ENCODE measurements at regions of chr15 and their contacts with region 1.

Region 1: DNA sequence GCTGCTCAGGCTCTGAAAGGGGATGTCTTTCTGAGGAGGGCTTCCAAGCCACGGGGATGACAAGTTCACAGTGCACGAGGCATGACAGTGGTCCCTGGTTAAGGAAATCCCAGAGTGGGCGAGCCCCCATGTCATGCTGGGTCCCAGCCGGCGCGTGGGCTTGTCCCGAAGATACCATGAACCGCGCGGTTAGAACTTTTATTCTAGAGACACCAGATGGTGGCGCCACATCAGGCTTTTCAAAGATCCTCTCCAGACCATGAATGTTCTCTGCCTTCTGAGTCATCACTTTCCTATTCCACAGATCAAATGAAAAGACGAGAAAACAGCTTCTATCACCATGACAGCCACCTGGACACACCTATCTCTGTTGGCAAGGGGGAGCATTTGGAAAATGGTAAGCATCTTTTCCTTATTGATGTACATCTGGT is 227.8 kb upstream of the LYSMD4 start:
- DNase-seq: peak in 1 of 2 donors; percentile 34
- H3K4me3 ChIP-seq: no peak overlapping the region
- H3K27ac ChIP-seq: no peak overlapping the region
- H3K4me1 ChIP-seq: peaks cover 0 to 6% of the 10 kb centered on the region in 2 donors
- H3K27me3 ChIP-seq: no peaks in the 10 kb centered on the region
- CTCF ChIP-seq: peak in 1 of 3 experiments; percentile 38

Region 2: DNA sequence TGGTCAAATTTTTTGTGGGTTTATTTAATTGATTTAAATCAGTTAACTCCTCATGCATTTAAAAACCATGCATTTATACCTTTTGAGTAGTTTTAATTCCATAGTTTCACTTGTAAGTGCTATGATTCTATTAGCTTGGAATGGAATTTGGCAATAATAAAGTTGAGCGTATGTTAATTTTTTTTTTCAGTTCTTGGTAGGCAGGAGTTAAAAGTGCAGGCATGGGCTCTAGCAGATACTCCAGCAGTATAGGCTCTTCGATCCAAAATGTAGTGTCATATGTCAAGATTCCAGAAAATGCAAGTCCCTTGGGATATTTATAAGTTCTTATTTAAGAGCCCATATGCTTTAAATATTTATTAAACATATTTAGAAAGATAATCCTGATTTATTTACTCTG is 298.1 kb before region 1 on chr15:
- intact Hi-C with region 1: no loop called
- DNase-seq: no peak
- H3K4me3 ChIP-seq: no peak overlapping the region
- H3K27ac ChIP-seq: no peak overlapping the region
- H3K4me1 ChIP-seq: peaks cover 0 to 11% of the 10 kb centered on the region in 2 donors
- H3K27me3 ChIP-seq: no peaks in the 10 kb centered on the region
- CTCF ChIP-seq: no peak

Region 3: DNA sequence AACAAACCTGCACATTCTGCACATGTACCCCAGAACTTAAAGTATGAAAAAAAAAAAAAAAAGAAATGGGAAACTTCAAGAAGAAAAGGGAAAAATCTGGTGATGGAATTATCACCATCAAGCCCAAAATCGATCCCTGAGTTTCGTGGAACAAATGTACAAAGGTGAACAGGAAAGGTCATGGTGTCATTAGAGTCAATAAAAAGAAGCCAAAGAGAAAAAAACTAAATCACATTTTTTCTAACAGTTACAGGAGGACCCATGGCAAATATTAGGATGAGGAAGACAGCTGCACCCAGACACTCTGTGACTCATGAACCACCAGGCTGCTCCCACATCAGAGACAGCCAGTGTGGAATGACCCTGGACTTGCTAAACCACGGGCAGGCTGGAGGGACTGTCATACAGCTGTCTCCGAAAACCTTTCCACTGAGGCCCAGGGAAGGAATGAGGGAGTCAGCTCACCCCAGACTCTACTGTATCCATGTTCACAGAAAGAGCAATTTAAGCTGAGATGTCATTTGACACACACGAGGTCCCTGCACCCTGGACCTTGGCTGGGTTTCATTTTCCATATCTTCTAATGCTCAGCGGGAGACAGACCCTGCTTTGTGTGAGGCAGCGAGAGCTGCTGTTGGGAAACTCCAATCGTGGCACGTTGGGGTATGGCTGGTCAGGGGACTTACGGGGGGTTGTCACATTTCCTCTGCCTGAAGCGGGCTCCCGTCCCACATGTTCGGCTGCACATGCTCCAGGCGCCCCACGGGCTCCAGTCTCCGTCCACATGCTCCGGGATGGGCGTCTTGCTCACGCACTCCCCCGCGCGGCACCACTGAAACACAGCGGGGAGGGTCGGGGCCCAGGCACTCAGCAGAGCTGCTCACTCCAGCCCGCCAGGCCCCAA is 170.5 kb after region 1 on chr15:
- intact Hi-C with region 1: loop called (anchors 10 kb)
- DNase-seq: no peak
- H3K4me3 ChIP-seq: peak overlapping the region; percentile 2 to 53
- H3K27ac ChIP-seq: peak overlapping the region in 1 of 2 donors; percentile 42
- H3K4me1 ChIP-seq: no peaks in the 10 kb centered on the region
- H3K27me3 ChIP-seq: no peaks in the 10 kb centered on the region
- CTCF ChIP-seq: peak; percentile 53 to 81 (median 72)